ENCODE measurements at regions of chr11 and their contacts with region 1.

Region 1: GRCh38 chr11:119533921-119534736 is 111.2 kb upstream of the THY1 start:
- DNase-seq: peak; percentile 71
- H3K4me3 Mint-ChIP-seq: no peak overlapping the region
- H3K27ac Mint-ChIP-seq: no peak overlapping the region
- H3K4me1 Mint-ChIP-seq: no peaks in the 10 kb centered on the region
- H3K27me3 Mint-ChIP-seq: peaks cover 15% of the 10 kb centered on the region

Region 2: GRCh38 chr11:119421941-119422808 is 112.0 kb before region 1 on chr11:
- CTCF ChIA-PET with region 1: no interaction called
- POLR2A ChIA-PET with region 1: no interaction called
- intact Hi-C with region 1: no loop called
- DNase-seq: peak; percentile 25
- H3K4me3 Mint-ChIP-seq: peak overlapping the region; percentile 72
- H3K27ac Mint-ChIP-seq: no peak overlapping the region
- H3K4me1 Mint-ChIP-seq: peaks cover 32% of the 10 kb centered on the region
- H3K27me3 Mint-ChIP-seq: peaks cover 46% of the 10 kb centered on the region

Region 3: GRCh38 chr11:119518746-119519730 is 15.1 kb before region 1 on chr11:
- CTCF ChIA-PET with region 1: interaction called, 10 read pairs
- POLR2A ChIA-PET with region 1: no interaction called
- intact Hi-C with region 1: no loop called
- DNase-seq: peak; percentile 57
- H3K4me3 Mint-ChIP-seq: no peak overlapping the region
- H3K27ac Mint-ChIP-seq: no peak overlapping the region
- H3K4me1 Mint-ChIP-seq: no peaks in the 10 kb centered on the region
- H3K27me3 Mint-ChIP-seq: peaks cover 14% of the 10 kb centered on the region